ENCODE measurements at regions of chr16 and their contacts with region 1.

Region 1: DNA sequence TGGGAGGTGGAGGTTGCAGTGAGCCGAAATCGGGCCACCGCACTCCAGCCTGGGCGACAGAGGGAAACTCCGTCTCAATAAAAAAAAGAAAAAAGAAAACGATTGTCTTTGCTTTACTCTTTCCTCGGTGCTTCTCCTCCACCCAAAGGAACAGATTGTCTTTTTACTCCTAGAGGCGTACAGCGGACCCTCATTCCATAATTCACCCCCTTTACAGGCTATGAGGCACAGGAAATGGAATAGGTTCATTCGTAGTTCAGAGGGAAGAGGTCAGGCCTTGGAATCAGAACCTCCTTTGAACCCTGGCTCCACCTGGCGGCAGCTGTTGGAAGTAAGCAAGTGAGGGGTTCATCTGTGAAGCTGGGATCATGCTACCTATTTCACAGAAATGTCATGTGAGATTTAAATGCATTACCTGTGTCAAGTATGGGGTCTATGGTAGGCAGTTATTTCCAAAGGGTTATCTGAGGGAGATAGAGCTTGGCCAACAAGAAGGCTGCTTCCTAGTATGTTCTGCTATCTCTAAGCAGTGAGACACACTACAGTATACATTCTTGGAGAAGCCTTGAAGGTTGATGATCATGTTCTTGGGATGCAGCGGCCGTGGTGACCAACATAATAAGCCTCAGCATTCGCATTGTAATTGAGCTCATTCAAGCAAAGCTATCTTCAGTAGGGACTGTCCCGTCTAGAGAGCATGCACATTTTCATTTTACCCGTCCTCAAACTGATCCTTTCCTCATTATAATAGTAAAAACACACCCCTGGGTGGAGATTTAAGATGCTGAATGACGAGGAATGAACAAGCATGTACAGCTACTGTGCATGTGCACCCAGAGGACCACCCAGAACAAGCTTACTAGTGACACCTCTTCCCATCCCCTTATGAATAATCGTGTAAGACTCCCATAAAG is 18.7 kb upstream of the ZNF689 start:
- DNase-seq: peak; percentile 84
- ATAC-seq: peak; percentile 93
- H3K4me3 Mint-ChIP-seq: peak overlapping the region; percentile 69
- H3K27ac Mint-ChIP-seq: peak overlapping the region; percentile 76
- H3K4me1 Mint-ChIP-seq: peaks cover 6% of the 10 kb centered on the region
- H3K27me3 Mint-ChIP-seq: no peaks in the 10 kb centered on the region
- CTCF ChIP-seq: peak; percentile 70

Region 2: DNA sequence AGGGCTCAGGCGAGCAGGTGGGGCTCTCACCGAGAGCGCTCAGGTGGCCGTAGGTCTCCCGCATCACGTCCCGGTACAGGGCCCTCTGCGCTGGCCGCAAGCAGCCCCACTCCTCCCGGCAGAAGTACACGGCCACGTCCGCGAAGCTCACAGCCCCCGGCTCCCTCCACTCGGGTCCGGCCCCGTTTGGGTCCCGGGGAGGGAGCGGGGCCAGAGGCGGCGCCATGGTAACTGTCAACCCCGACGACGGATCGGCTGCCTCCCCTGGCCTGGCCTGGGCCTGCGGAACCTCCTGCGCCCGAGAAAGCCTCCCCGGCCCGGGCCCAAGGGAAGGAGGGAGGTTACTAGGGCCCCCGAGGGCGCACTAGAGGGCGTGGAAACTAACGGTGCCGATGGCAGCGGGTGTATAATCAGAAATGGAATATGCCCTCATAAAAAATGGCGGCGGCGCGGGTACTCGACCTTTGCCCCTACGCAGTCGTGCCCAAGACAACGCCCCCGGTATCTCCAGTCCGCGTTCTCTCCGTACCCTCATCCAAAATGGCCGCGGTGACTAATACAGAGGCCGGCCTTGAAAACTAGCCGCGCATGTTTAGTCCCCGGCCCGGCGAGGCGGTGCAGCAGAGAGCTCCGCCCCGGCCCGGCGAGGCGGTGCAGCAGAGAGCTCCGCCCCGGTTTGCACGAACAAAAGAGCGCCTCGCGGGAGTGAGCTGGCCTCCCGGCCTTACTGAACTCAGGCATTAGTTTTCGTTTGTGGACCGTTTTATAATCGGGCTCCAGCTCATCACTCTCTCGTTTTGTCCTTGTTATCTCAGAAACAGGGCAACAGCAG is 70.7 kb before region 1 on chr16 and contains the start of gene ZNF764:
- CTCF ChIA-PET with region 1: interaction called, 3 read pairs
- POLR2A ChIA-PET with region 1: interaction called, 5 read pairs
- intact Hi-C with region 1: loop called (anchors 1 kb)
- DNase-seq: peak; percentile 91
- ATAC-seq: peak; percentile 93
- H3K4me3 Mint-ChIP-seq: peak within 1 kb of the TSS; percentile 83
- H3K27ac Mint-ChIP-seq: peak within 1 kb of the TSS; percentile 84
- H3K4me1 Mint-ChIP-seq: peaks cover 43% of the 10 kb centered on the region
- H3K27me3 Mint-ChIP-seq: no peaks in the 10 kb centered on the region
- CTCF ChIP-seq: no peak
- total RNA-seq, gene ZNF764: 16.1 and 19.2 TPM in 2 replicates

Region 3: DNA sequence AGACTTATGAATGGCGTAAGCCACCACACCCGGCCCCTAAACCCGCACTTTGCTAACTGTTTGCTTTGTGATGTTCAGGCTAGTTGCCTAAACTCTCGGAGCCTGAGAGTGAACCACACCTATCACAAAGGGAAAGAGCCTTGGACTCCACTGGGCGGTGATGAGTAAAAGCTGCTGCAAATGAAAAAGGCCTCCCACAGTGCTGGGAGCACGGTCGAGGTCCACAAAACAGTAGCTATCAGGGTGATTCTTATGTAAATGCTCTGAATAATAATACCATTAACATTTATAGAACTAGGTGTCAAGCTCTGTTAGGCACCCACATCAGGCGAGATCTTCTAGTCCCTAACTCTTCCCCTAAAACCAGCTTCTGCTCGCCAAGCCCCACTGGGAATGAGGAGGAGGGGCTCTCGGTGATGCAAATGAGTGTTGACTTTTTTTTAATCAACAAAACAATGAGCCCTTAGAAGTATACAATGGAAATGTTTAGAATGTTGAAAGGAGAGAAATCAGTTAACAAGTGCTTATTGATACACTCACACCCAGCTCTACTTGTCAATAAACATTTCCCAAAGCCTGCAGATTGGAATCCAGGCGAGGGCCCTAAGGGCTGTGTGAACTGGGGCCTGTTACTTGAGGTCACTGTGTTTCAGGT is 49.2 kb after region 1 on chr16:
- CTCF ChIA-PET with region 1: no interaction called
- POLR2A ChIA-PET with region 1: no interaction called
- intact Hi-C with region 1: no loop called
- DNase-seq: no peak
- ATAC-seq: no peak
- H3K4me3 Mint-ChIP-seq: no peak overlapping the region
- H3K27ac Mint-ChIP-seq: no peak overlapping the region
- H3K4me1 Mint-ChIP-seq: peaks cover 2% of the 10 kb centered on the region
- H3K27me3 Mint-ChIP-seq: no peaks in the 10 kb centered on the region
- CTCF ChIP-seq: no peak

Region 4: DNA sequence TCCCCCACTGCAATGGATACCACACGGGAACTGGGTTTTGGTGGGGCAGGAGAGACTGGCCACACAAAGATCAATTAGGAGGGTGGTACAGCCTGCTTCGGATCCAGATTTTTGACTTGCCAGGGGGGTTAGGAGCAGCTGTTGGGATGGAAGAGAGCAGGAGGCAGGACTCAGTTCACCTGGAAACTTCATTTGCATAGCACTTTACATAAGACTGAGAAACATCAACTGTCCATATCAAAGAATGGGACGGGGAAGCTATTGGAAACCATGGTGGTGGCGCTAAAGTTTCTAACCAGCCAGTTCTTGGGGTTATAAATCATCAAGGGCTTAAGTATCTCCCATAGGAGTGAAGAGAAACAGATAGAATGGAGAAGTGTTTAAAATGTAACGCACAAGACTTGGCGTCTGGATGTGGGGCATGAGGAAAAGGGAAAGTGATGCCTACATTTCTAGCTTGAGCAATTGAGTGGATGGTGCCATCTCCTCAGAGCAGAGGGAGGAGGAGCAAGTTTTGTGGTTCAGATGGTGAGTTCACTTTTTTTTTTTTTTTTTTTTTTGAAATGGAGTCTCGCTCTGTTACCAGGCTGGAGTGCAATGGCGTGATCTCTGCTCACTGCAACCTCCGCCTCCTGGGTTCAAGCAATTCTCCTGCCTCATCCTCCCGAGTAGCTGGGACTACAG is 63.6 kb after region 1 on chr16:
- CTCF ChIA-PET with region 1: interaction called, 8 read pairs
- POLR2A ChIA-PET with region 1: interaction called, 17 read pairs
- intact Hi-C with region 1: loop called (anchors 2 kb)
- DNase-seq: no peak
- ATAC-seq: no peak
- H3K4me3 Mint-ChIP-seq: no peak overlapping the region
- H3K27ac Mint-ChIP-seq: no peak overlapping the region
- H3K4me1 Mint-ChIP-seq: peaks cover 11% of the 10 kb centered on the region
- H3K27me3 Mint-ChIP-seq: no peaks in the 10 kb centered on the region
- CTCF ChIP-seq: no peak

Measured in activated B cell treated with CpG ODN at 0.5 μM for 24 hours (primary cell).